T-cell (primary cell): ENCODE measurements at regions of chr18 and their contacts with region 1.

Region 1: DNA sequence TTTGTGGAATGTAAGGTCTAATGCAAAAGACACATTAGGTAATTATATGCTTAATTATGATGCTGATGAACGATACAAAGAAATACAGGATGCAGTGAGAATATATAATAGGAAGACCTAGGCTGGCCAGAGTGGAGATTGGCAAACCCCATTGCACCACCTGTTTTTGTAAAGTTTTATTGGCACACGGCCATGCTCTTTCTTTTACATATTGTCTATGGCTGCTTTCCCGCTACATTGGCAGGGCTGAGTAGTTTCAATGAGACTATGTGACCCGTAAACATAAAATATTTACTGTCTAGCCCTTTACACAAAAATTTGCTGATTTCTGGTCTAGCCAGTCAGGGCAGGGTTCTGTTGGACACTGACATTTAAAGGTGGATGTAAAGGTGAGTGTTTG is 5.4 kb downstream of the SEC11C start:
- DNase-seq: no peak
- ATAC-seq: no peak
- H3K4me3 ChIP-seq: no peak overlapping the region
- H3K4me3 Mint-ChIP-seq: no peak overlapping the region
- H3K27ac ChIP-seq: no peak overlapping the region
- H3K27ac Mint-ChIP-seq: no peak overlapping the region
- H3K4me1 ChIP-seq: peaks cover 16 to 21% of the 10 kb centered on the region in 2 experiments
- H3K4me1 Mint-ChIP-seq: peaks cover 72 to 82% (median 77%) of the 10 kb centered on the region in 3 donors
- H3K27me3 ChIP-seq: no peaks in the 10 kb centered on the region
- H3K27me3 Mint-ChIP-seq: no peaks in the 10 kb centered on the region

Region 2: GRCh38 chr18:57784034-57784800 is 1360.8 kb before region 1 on chr18:
- CTCF ChIA-PET with region 1: no interaction called
- POLR2A ChIA-PET with region 1: no interaction called
- DNase-seq: no peak
- ATAC-seq: no peak
- H3K4me3 ChIP-seq: no peak overlapping the region
- H3K4me3 Mint-ChIP-seq: no peak overlapping the region
- H3K27ac ChIP-seq: no peak overlapping the region
- H3K27ac Mint-ChIP-seq: no peak overlapping the region
- H3K4me1 ChIP-seq: no peaks in the 10 kb centered on the region
- H3K4me1 Mint-ChIP-seq: peaks cover 2 to 11% (median 2%) of the 10 kb centered on the region in 3 donors
- H3K27me3 ChIP-seq: no peaks in the 10 kb centered on the region
- H3K27me3 Mint-ChIP-seq: no peaks in the 10 kb centered on the region

Region 3: GRCh38 chr18:59109375-59109774 is 35.7 kb before region 1 on chr18:
- CTCF ChIA-PET with region 1: no interaction called
- POLR2A ChIA-PET with region 1: no interaction called
- DNase-seq: no peak
- ATAC-seq: no peak
- H3K4me3 ChIP-seq: no peak overlapping the region
- H3K4me3 Mint-ChIP-seq: no peak overlapping the region
- H3K27ac ChIP-seq: no peak overlapping the region
- H3K27ac Mint-ChIP-seq: no peak overlapping the region
- H3K4me1 ChIP-seq: no peaks in the 10 kb centered on the region
- H3K4me1 Mint-ChIP-seq: no peaks in the 10 kb centered on the region
- H3K27me3 ChIP-seq: peaks cover 4 to 20% of the 10 kb centered on the region in 2 experiments
- H3K27me3 Mint-ChIP-seq: peaks cover 72 to 75% of the 10 kb centered on the region in 2 donors

Region 4: DNA sequence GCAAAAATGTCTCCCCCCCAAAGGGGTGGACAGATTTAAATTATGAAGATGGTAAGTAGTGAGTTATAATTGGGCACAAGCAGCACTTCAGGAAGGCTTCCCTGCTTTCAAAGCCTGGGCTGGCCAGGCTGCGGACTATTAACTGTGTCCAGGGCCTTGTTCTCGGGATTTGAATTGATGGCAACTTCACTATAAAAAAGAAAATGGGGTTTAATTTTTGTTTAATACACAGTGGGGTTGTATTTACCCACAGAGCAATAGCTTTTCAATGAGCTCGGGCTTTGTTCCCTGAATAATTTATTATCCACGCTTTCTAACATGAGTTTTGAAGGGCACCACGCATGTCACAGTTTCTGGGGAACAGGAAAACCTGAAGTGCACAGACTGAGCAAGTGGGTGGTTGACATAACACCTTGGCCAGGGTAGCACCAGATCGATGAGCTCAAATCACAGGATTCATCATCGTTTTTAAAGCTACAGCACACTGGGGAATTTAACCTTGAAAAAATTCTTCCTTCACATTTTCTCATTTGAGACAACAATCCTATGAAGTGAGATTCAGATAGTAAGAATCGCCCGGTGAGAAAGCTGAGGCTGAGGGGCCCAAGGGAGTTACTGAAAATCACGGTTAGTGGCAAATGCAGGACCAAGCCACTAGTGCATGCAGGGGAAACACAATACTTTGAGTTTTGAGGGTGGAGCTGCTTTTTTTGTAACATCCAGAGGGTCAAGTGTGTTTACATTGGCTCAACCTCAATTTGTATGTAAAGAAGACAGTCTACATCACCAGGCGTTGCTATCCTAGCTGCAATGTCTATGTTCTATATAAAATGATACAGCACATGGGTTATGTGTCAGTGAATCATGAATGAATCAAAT is 242.9 kb after region 1 on chr18:
- CTCF ChIA-PET with region 1: no interaction called
- POLR2A ChIA-PET with region 1: interaction called in 1 of 2 experiments, 11 read pairs
- DNase-seq: no peak
- ATAC-seq: no peak
- H3K4me3 ChIP-seq: no peak overlapping the region
- H3K4me3 Mint-ChIP-seq: no peak overlapping the region
- H3K27ac ChIP-seq: no peak overlapping the region
- H3K27ac Mint-ChIP-seq: no peak overlapping the region
- H3K4me1 ChIP-seq: no peaks in the 10 kb centered on the region
- H3K4me1 Mint-ChIP-seq: no peaks in the 10 kb centered on the region
- H3K27me3 ChIP-seq: peaks cover 0 to 11% of the 10 kb centered on the region in 2 experiments
- H3K27me3 Mint-ChIP-seq: peaks cover 11 to 20% of the 10 kb centered on the region in 2 donors